Posterior vena cava (tissue), 2 donors: ENCODE measurements at regions of chr21 and their contacts with region 1.

Region 1: GRCh38 chr21:29953072-29953471 is 13.3 kb upstream of the GRIK1 start:
- DNase-seq: no peak

Region 2: GRCh38 chr21:30014886-30015285 is 61.8 kb after region 1 on chr21:
- intact Hi-C with region 1: loop called in 1 of 2 experiments (anchors 5 kb)
- DNase-seq: no peak